ENCODE measurements at regions of chr6 and their contacts with region 1.

Region 1: GRCh38 chr6:44246663-44247337 is at the start of gene HSP90AB1:
- DNase-seq: peak; percentile 88 to 99 (median 94)
- ATAC-seq: peak; percentile 85
- H3K4me3 ChIP-seq: peak within 1 kb of the TSS; percentile 94
- H3K27ac ChIP-seq: peak within 1 kb of the TSS; percentile 98
- H3K4me1 ChIP-seq: peaks cover 22 to 34% of the 10 kb centered on the region in 2 experiments
- H3K27me3 ChIP-seq: no peaks in the 10 kb centered on the region
- CTCF ChIP-seq: no peak
- EP300 ChIP-seq: peak; percentile 34; the same call in 1 of the 2 replicates
- POLR2A ChIP-seq: peak; percentile 100
- RAD21 ChIP-seq: no peak
- polyA plus RNA-seq, gene HSP90AB1: 1,975 to 2,865 TPM

Region 2: DNA sequence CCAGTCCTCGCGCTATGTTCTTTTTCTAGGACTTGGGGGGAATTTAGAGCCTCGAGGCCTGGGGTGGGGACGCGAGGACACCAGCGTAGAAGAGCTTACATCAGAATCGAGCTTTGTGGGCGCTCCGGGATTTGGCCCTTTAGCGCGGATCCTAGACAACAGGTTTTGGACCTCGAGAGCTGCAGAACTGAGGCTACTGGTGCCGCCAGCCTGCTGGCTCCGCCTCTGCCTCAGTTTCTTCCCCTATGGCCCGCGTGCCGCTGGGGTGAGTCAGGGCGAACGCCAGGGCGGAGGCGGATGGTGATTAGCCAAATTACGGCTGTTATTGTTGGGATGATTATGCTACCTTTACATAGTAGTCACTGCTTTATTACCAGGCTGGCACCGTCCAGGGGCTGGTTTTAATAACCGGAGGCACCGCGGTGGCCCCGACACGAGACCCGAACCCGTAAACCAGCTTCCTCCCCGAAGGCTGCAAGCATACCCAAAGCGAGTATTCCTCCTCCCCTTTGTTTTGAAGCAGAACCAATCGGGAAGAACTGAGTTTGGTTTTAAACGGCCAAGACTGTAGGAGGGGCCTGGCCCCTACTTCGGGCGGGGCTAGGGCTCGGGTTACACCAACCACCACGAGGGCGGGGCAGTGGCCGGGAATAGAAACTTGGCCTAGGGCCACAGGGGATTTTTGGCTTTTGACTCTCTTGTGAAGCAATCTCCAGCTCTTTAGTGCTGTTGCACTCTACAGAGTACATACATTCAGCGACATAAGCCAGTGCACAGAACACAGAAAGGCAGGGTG is 617.1 kb before region 1 on chr6:
- CTCF ChIA-PET with region 1: no interaction called
- POLR2A ChIA-PET with region 1: interaction called, 10 read pairs
- in situ Hi-C with region 1: no loop called
- intact Hi-C with region 1: no loop called
- DNase-seq: peak; percentile 92 to 99 (median 96)
- ATAC-seq: peak; percentile 75
- H3K4me3 ChIP-seq: peak overlapping the region; percentile 58
- H3K27ac ChIP-seq: peak overlapping the region; percentile 97
- H3K4me1 ChIP-seq: peaks cover 40 to 59% of the 10 kb centered on the region in 2 experiments
- H3K27me3 ChIP-seq: no peaks in the 10 kb centered on the region; a peak in 1 of 5 replicates
- CTCF ChIP-seq: no peak
- EP300 ChIP-seq: peak; percentile 53; the same call in 1 of the 2 replicates
- POLR2A ChIP-seq: peak; percentile 97
- RAD21 ChIP-seq: peak in 1 of 2 experiments; percentile 5; a peak in 2 of 4 replicates

Region 3: GRCh38 chr6:43883847-43884651 is 362.8 kb before region 1 on chr6:
- CTCF ChIA-PET with region 1: no interaction called
- POLR2A ChIA-PET with region 1: no interaction called
- in situ Hi-C with region 1: no loop called
- intact Hi-C with region 1: no loop called
- DNase-seq: no peak
- ATAC-seq: no peak
- H3K4me3 ChIP-seq: no peak overlapping the region
- H3K27ac ChIP-seq: no peak overlapping the region
- H3K4me1 ChIP-seq: peaks cover 20 to 27% of the 10 kb centered on the region in 2 experiments
- H3K27me3 ChIP-seq: no peaks in the 10 kb centered on the region
- CTCF ChIP-seq: no peak
- EP300 ChIP-seq: no peak
- POLR2A ChIP-seq: no peak
- RAD21 ChIP-seq: no peak

Region 4: DNA sequence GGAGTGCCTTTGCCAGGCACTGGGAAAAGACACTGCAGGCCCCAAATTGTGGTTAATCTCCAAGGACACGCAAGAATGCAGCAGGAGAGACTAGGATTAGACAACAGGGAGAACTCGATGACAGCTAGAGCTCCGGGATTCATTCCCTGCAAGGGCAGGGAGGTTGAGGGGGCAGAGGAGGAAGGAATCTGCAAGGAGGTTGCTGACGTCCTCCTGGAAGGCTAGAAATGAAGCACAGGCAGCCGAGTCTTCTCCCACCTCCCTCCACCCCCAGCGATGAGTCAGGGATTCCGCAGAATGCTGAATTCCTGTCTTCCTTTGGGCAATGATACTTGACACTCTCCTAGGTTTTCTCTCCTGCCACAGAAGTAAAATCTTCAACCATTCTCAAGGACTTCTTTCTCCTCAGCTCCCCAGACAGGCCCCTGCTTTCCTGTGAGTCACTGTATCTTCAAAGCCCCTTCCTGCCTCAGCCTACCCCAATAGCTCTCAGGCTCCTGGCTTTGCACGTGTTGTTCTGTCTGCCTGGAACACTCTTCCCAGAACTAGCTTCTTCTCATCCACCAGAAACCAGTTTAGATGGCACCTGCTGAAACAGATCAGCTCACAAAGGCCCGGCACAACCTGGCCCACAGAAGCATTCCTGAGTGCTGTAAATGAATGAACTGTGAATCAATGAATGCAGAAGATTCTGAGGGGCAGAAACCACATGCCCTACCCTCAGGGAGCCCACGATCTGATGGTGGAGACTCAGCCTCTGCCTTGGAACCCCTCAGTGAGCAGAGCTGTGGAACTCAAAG is 205.1 kb before region 1 on chr6:
- CTCF ChIA-PET with region 1: no interaction called
- POLR2A ChIA-PET with region 1: no interaction called
- in situ Hi-C with region 1: no loop called
- intact Hi-C with region 1: no loop called
- DNase-seq: peak; percentile 79 to 91 (median 82)
- ATAC-seq: peak; percentile 70
- H3K4me3 ChIP-seq: no peak overlapping the region
- H3K27ac ChIP-seq: peak overlapping the region; percentile 84
- H3K4me1 ChIP-seq: peaks cover 40 to 48% of the 10 kb centered on the region in 2 experiments
- H3K27me3 ChIP-seq: no peaks in the 10 kb centered on the region; a peak in 1 of 5 replicates
- CTCF ChIP-seq: no peak; a peak in 1 of 6 replicates
- EP300 ChIP-seq: peak; percentile 73
- POLR2A ChIP-seq: 0 out of 2 replicates have a peak, but pooled peaks have one; percentile 34
- RAD21 ChIP-seq: peak in 1 of 2 experiments; percentile 13; a peak in 2 of 4 replicates

Region 5: DNA sequence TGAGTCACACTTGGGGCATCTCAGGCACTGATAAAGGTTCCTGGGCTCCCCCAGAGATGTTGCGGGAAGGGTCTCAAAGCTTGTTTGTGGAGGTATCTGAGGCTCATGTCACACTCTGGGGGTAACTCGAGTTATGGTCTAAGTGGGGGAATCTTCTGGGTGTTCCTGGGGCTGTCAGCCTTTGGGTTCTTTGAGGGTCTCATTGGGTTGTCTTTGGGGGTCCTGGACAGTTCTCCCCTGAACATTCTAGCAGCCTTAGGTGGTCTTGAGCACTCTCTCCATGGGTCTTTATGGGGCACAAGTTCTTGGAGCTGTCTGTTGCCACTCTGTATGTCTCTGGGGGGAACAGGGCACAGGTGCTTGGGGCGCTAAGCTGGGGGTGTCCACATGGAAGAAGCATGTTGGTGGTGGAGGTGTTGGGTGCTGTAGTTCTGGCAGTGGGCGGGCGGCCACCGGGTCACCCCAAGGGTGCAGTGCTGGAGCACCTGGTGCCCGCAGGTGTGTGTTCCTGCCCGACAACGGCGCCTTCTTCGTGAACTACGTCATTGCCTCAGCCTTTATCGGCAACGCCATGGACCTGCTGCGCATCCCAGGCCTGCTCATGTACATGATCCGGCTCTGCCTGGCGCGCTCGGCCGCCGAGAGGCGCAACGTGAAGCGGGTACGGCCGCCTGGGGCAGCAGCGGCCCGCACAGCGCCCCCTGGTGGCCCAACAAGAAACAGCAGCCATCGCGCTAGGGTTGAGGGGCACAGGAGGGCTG is 95.3 kb before region 1 on chr6:
- CTCF ChIA-PET with region 1: no interaction called
- POLR2A ChIA-PET with region 1: interaction called, 10 read pairs
- in situ Hi-C with region 1: no loop called
- intact Hi-C with region 1: no loop called
- DNase-seq: peak; percentile 88 to 95 (median 90)
- ATAC-seq: peak; percentile 96
- H3K4me3 ChIP-seq: no peak overlapping the region
- H3K27ac ChIP-seq: no peak overlapping the region
- H3K4me1 ChIP-seq: peaks cover 0 to 21% of the 10 kb centered on the region in 2 experiments; a peak in 3 of 5 replicates
- H3K27me3 ChIP-seq: no peaks in the 10 kb centered on the region
- CTCF ChIP-seq: peak; percentile 100
- EP300 ChIP-seq: no peak
- POLR2A ChIP-seq: no peak
- RAD21 ChIP-seq: peak; percentile 88 to 97

Region 6: DNA sequence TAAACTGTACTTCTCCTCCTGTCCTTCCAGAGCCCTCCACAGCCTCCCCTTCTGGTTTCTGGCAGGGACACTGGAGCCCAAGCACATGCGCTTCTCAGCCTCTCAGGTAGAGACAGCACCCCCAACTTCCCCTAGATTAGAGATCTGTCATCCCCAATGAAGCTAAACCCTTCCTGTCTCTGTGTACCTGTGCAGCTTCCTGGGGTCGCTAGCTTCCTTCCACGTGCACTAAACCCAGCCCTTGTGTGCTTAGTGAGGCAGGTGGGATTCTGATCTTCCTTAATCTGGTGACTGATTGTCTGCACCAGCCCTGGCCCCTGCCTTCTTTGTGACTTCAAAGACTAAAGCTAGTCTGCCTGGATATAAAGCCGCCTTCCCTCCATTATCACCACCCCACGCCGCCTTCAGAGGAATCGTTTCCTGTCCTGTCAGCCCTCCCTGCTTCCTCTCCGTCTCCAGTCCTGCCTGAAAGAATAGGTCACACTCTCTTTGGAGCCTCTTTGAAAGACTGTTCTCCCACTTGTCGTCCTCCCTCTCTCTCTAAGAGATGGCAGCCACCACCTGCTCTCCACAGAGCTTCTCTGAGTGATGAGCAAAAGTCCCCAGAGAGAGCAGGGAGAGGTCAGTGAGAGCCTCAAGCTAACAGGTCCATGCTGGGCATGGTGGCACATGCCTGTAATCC is 60.7 kb before region 1 on chr6:
- CTCF ChIA-PET with region 1: no interaction called
- POLR2A ChIA-PET with region 1: interaction called, 17 read pairs
- in situ Hi-C with region 1: no loop called
- intact Hi-C with region 1: no loop called
- DNase-seq: peak in 2 of 4 experiments; percentile 22 to 23
- ATAC-seq: peak; percentile 59
- H3K4me3 ChIP-seq: no peak overlapping the region
- H3K27ac ChIP-seq: no peak overlapping the region
- H3K4me1 ChIP-seq: peaks cover 10 to 11% of the 10 kb centered on the region in 2 experiments; a peak in 3 of 5 replicates
- H3K27me3 ChIP-seq: no peaks in the 10 kb centered on the region
- CTCF ChIP-seq: no peak
- EP300 ChIP-seq: no peak
- POLR2A ChIP-seq: no peak
- RAD21 ChIP-seq: no peak

Region 7: DNA sequence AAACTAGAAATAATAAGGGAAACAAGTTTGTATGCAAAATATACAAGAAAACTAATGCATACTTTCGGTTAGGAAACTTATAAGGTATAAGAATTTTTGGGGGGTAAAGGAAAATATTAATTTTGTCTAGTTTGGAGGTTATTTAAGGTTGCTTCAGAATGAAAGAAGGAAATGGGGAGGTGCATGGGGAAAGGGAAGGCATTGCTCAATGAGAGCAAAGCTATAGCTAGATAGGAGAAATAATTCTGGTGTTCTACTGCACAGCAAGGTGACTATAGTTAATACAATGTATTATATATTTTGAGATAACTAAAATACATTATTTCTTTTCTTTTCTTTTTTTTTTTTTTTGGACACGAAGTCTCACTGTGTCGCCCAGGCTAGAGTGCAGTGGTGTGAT is 35.5 kb before region 1 on chr6:
- CTCF ChIA-PET with region 1: no interaction called
- POLR2A ChIA-PET with region 1: interaction called, 16 read pairs
- in situ Hi-C with region 1: no loop called
- intact Hi-C with region 1: no loop called
- DNase-seq: no peak
- ATAC-seq: no peak
- H3K4me3 ChIP-seq: no peak overlapping the region
- H3K27ac ChIP-seq: no peak overlapping the region
- H3K4me1 ChIP-seq: peaks cover 7 to 8% of the 10 kb centered on the region in 2 experiments; a peak in 4 of 5 replicates
- H3K27me3 ChIP-seq: no peaks in the 10 kb centered on the region
- CTCF ChIP-seq: no peak
- EP300 ChIP-seq: no peak
- POLR2A ChIP-seq: no peak
- RAD21 ChIP-seq: no peak

Region 8: GRCh38 chr6:44257025-44257752 is 10.4 kb after region 1 on chr6 and contains the start of gene SLC35B2:
- CTCF ChIA-PET with region 1: interaction called, 3 read pairs
- POLR2A ChIA-PET with region 1: interaction called, 144 read pairs
- in situ Hi-C with region 1: no loop called
- intact Hi-C with region 1: no loop called
- DNase-seq: peak; percentile 92 to 94 (median 93)
- ATAC-seq: peak; percentile 71
- H3K4me3 ChIP-seq: peak within 1 kb of the TSS; percentile 81
- H3K27ac ChIP-seq: peak within 1 kb of the TSS; percentile 93
- H3K4me1 ChIP-seq: peaks cover 32 to 45% of the 10 kb centered on the region in 2 experiments; a peak in 4 of 5 replicates
- H3K27me3 ChIP-seq: no peaks in the 10 kb centered on the region
- CTCF ChIP-seq: peak; percentile 70 to 90 (median 78); a peak in 5 of 6 replicates
- EP300 ChIP-seq: peak; percentile 33
- POLR2A ChIP-seq: peak; percentile 75
- RAD21 ChIP-seq: peak in 1 of 2 experiments; percentile 57; a peak in 3 of 4 replicates
- polyA plus RNA-seq, gene SLC35B2: 14.5 to 19.2 TPM